Naive thymus-derived CD4-positive, alpha-beta T cell (primary cell): ENCODE measurements at regions of chr6 and their contacts with region 1.

Region 1: DNA sequence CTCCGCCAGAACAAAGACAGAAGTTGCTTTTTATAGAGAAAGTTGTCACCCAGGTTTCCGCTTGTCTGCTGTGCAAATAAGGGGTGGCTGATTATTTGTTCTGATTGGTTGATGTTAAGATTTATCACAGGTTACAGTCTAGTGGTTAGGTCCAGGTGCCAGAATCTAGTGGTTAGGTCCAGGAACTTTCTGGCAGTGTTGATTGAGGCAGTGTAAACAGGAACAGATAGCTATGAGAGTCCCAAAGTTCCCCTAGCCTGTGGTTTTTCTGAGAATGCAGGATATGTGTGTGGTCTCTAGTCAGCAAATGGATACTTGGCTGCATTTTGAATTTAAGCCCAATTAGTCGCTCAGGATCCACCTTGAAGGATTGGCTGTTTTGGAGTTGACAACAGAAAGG is 148.0 kb downstream of the TMEM200A start:
- DNase-seq: peak in 8 of 9 donors; percentile 50 to 87 (median 74)
- ATAC-seq: peak; percentile 94
- H3K4me3 ChIP-seq: no peak overlapping the region
- H3K4me3 Mint-ChIP-seq: peak overlapping the region in 9 of 10 donors; percentile 40 to 75 (median 64)
- H3K27ac ChIP-seq: peak overlapping the region; percentile 62
- H3K27ac Mint-ChIP-seq: peak overlapping the region; percentile 77 to 97 (median 87)
- H3K4me1 ChIP-seq: peaks cover 35 to 42% of the 10 kb centered on the region in 2 donors
- H3K4me1 Mint-ChIP-seq: peaks cover 17 to 80% (median 73%) of the 10 kb centered on the region in 7 donors
- H3K27me3 ChIP-seq: no peaks in the 10 kb centered on the region
- H3K27me3 Mint-ChIP-seq: peaks cover 0 to 4% (median 0%) of the 10 kb centered on the region in 5 donors

Region 2: GRCh38 chr6:129490521-129491245 is 1023.1 kb before region 1 on chr6:
- CTCF ChIA-PET with region 1: no interaction called
- POLR2A ChIA-PET with region 1: no interaction called
- intact Hi-C with region 1: loop called in 1 of 2 experiments (anchors 2 kb)
- DNase-seq: peak in 8 of 9 donors; percentile 53 to 89 (median 72)
- ATAC-seq: peak; percentile 96
- H3K4me3 ChIP-seq: peak overlapping the region; percentile 38
- H3K4me3 Mint-ChIP-seq: peak overlapping the region; percentile 61 to 90 (median 76)
- H3K27ac ChIP-seq: peak overlapping the region; percentile 73
- H3K27ac Mint-ChIP-seq: peak overlapping the region; percentile 84 to 97 (median 94)
- H3K4me1 ChIP-seq: peaks cover 15 to 21% of the 10 kb centered on the region in 2 donors
- H3K4me1 Mint-ChIP-seq: peaks cover 11 to 46% (median 32%) of the 10 kb centered on the region in 7 donors
- H3K27me3 ChIP-seq: no peaks in the 10 kb centered on the region
- H3K27me3 Mint-ChIP-seq: no peaks in the 10 kb centered on the region

Region 3: GRCh38 chr6:129748212-129748900 is 765.4 kb before region 1 on chr6:
- CTCF ChIA-PET with region 1: no interaction called
- POLR2A ChIA-PET with region 1: no interaction called
- intact Hi-C with region 1: loop called in 1 of 2 experiments (anchors 10 kb)
- DNase-seq: peak in 8 of 9 donors; percentile 35 to 61 (median 42)
- ATAC-seq: peak; percentile 85
- H3K4me3 ChIP-seq: peak overlapping the region; percentile 43
- H3K4me3 Mint-ChIP-seq: peak overlapping the region; percentile 31 to 86 (median 79)
- H3K27ac ChIP-seq: peak overlapping the region; percentile 69
- H3K27ac Mint-ChIP-seq: peak overlapping the region; percentile 82 to 97 (median 89)
- H3K4me1 ChIP-seq: peaks cover 44 to 49% of the 10 kb centered on the region in 2 donors
- H3K4me1 Mint-ChIP-seq: peaks cover 40 to 81% (median 71%) of the 10 kb centered on the region in 7 donors
- H3K27me3 ChIP-seq: no peaks in the 10 kb centered on the region
- H3K27me3 Mint-ChIP-seq: no peaks in the 10 kb centered on the region

Region 4: GRCh38 chr6:130259557-130259956 is 254.2 kb before region 1 on chr6:
- CTCF ChIA-PET with region 1: no interaction called
- POLR2A ChIA-PET with region 1: no interaction called
- intact Hi-C with region 1: no loop called
- DNase-seq: no peak
- ATAC-seq: no peak
- H3K4me3 ChIP-seq: peak overlapping the region; percentile 45
- H3K4me3 Mint-ChIP-seq: peak overlapping the region in 9 of 10 donors; percentile 23 to 75 (median 48)
- H3K27ac ChIP-seq: no peak overlapping the region
- H3K27ac Mint-ChIP-seq: peak overlapping the region in 4 of 9 donors; percentile 41 to 80 (median 54)
- H3K4me1 ChIP-seq: peaks cover 0 to 13% of the 10 kb centered on the region in 2 donors
- H3K4me1 Mint-ChIP-seq: peaks cover 12 to 40% (median 27%) of the 10 kb centered on the region in 7 donors
- H3K27me3 ChIP-seq: no peaks in the 10 kb centered on the region
- H3K27me3 Mint-ChIP-seq: peaks cover 0 to 7% (median 0%) of the 10 kb centered on the region in 5 donors

Region 5: GRCh38 chr6:130322673-130323268 is 191.0 kb before region 1 on chr6:
- CTCF ChIA-PET with region 1: no interaction called
- POLR2A ChIA-PET with region 1: no interaction called
- intact Hi-C with region 1: loop called in 1 of 2 experiments (anchors 1 kb)
- DNase-seq: peak in 8 of 9 donors; percentile 30 to 61 (median 56)
- ATAC-seq: peak; percentile 61
- H3K4me3 ChIP-seq: no peak overlapping the region
- H3K4me3 Mint-ChIP-seq: no peak overlapping the region
- H3K27ac ChIP-seq: no peak overlapping the region
- H3K27ac Mint-ChIP-seq: no peak overlapping the region
- H3K4me1 ChIP-seq: no peaks in the 10 kb centered on the region
- H3K4me1 Mint-ChIP-seq: peaks cover 0 to 16% (median 5%) of the 10 kb centered on the region in 7 donors
- H3K27me3 ChIP-seq: no peaks in the 10 kb centered on the region
- H3K27me3 Mint-ChIP-seq: peaks cover 0 to 33% (median 0%) of the 10 kb centered on the region in 5 donors

Region 6: DNA sequence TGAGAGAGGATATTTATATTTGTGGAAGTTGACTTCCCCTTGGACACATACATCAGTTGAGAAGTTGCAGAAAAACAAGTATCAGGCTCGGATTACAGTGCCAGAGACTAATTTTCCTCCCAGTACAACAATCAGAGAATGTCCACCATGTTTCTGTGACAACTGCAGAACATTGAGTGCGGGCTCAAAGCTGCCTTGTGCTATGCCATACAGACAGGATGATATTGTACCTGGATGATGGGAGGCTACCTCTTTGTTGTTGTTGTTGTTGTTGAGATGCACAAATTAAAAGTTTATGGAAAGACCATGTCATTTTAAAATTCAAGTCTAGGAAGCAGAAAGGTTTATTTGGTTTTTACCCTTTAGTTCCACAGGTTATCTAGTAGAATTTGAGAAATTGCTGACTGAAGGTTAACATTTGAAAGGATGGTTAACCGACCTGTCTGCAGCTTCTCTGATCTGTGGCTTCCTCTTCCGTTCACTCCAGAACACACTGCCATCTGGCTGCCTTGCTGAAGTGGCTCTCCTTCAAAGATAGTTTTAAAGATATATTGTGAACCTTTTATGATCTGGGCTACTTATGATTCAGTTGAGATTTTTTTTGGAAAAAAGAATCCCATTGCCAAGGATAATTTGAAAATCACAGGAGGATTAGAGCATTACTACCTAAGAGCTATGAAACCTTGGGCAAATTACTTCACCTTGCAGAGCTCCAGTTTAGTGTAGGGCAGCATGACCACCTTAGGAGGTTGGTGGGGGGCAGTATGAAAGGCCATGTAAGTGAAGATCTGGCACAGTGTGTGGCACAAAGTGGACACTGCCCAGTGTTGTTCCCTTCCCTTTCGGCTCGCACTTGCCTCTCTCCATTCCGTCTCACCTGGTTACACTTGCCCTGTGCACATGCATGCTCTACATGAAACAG is 132.1 kb before region 1 on chr6:
- CTCF ChIA-PET with region 1: no interaction called
- POLR2A ChIA-PET with region 1: no interaction called
- intact Hi-C with region 1: loop called in 1 of 2 experiments (anchors 5 kb)
- DNase-seq: peak in 7 of 9 donors; percentile 19 to 67 (median 48)
- ATAC-seq: peak; percentile 93
- H3K4me3 ChIP-seq: no peak overlapping the region
- H3K4me3 Mint-ChIP-seq: peak overlapping the region in 5 of 10 donors; percentile 0 to 46 (median 11)
- H3K27ac ChIP-seq: no peak overlapping the region
- H3K27ac Mint-ChIP-seq: peak overlapping the region in 1 of 9 donors; percentile 53
- H3K4me1 ChIP-seq: peaks cover 11 to 14% of the 10 kb centered on the region in 2 donors
- H3K4me1 Mint-ChIP-seq: peaks cover 14 to 27% (median 17%) of the 10 kb centered on the region in 7 donors
- H3K27me3 ChIP-seq: no peaks in the 10 kb centered on the region
- H3K27me3 Mint-ChIP-seq: peaks cover 0 to 16% (median 0%) of the 10 kb centered on the region in 5 donors

Region 7: DNA sequence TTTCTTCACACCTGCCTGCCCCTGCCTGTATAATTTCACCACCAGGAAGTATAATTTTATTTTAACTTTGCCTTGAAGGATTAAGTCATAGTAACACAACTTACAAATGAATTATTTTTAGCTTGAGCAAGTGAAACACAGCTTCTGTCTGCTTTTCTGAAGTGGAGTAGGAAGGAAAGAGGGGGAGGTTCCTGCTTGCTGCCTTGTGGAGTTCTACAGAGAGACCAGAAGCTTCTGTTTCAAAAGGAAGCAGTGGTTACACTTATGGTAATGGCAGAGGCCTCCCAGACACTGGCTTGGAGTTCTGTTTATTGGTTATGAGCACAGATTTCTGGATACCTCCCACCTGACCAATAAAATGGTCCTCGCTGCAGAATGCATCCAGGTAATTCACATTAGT is 11.6 kb after region 1 on chr6:
- CTCF ChIA-PET with region 1: no interaction called
- POLR2A ChIA-PET with region 1: interaction called, 4 read pairs
- intact Hi-C with region 1: loop called in 1 of 2 experiments (anchors 1 kb)
- DNase-seq: peak in 6 of 9 donors; percentile 19 to 40 (median 40)
- ATAC-seq: peak; percentile 58
- H3K4me3 ChIP-seq: no peak overlapping the region
- H3K4me3 Mint-ChIP-seq: peak overlapping the region in 9 of 10 donors; percentile 2 to 73 (median 44)
- H3K27ac ChIP-seq: peak overlapping the region; percentile 14
- H3K27ac Mint-ChIP-seq: peak overlapping the region; percentile 66 to 87 (median 86)
- H3K4me1 ChIP-seq: peaks cover 17 to 33% of the 10 kb centered on the region in 2 donors
- H3K4me1 Mint-ChIP-seq: peaks cover 13 to 55% (median 47%) of the 10 kb centered on the region in 7 donors
- H3K27me3 ChIP-seq: no peaks in the 10 kb centered on the region
- H3K27me3 Mint-ChIP-seq: no peaks in the 10 kb centered on the region

Region 8: DNA sequence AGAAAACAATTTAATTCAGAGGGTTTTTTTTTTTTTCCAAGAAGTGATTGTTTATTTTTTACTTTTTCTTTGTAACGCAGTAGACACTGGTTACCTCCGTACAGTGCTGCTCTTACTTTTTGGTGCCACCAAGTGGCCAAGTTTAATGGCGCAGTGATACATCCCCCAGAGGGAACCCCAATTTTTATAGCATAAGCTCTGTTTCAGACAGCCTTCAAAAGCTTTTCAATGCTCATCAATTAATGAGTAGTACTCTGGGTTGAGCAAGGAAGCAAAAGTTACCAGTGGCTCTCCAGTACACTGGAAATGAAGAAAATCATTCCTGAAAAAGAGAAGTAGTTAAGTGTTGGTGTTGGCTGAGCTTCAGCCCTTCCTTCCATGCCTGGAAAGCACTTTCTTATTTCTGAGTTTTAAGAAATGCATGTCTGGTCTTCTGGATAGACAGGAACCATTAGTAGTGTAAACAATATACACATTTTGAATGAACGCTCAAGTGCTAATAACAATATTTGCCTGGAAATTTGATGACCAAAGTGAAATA is 184.3 kb after region 1 on chr6:
- CTCF ChIA-PET with region 1: no interaction called
- POLR2A ChIA-PET with region 1: no interaction called
- intact Hi-C with region 1: loop called in 1 of 2 experiments (anchors 1 kb)
- DNase-seq: peak in 7 of 9 donors; percentile 16 to 60 (median 58)
- ATAC-seq: peak; percentile 81
- H3K4me3 ChIP-seq: no peak overlapping the region
- H3K4me3 Mint-ChIP-seq: peak overlapping the region in 5 of 10 donors; percentile 24 to 57 (median 41)
- H3K27ac ChIP-seq: no peak overlapping the region
- H3K27ac Mint-ChIP-seq: peak overlapping the region in 1 of 9 donors; percentile 70
- H3K4me1 ChIP-seq: peaks cover 6 to 13% of the 10 kb centered on the region in 2 donors
- H3K4me1 Mint-ChIP-seq: peaks cover 11 to 63% (median 40%) of the 10 kb centered on the region in 7 donors
- H3K27me3 ChIP-seq: no peaks in the 10 kb centered on the region
- H3K27me3 Mint-ChIP-seq: peaks cover 0 to 5% (median 4%) of the 10 kb centered on the region in 5 donors